ENCODE measurements at regions of chr7 and their contacts with region 1.

Region 1: GRCh38 chr7:79377097-79377496 is 76.4 kb downstream of the MAGI2 start:
- DNase-seq: peak; percentile 50
- ATAC-seq: peak; percentile 49; the same call in 1 of the 2 replicates
- H3K4me3 ChIP-seq: no peak overlapping the region
- H3K27ac ChIP-seq: no peak overlapping the region
- H3K4me1 ChIP-seq: peaks cover 2% of the 10 kb centered on the region; the same call in 1 of the 2 replicates
- H3K27me3 ChIP-seq: no peaks in the 10 kb centered on the region
- CTCF ChIP-seq: no peak
- POLR2A ChIP-seq: no peak
- RAD21 ChIP-seq: no peak

Region 2: DNA sequence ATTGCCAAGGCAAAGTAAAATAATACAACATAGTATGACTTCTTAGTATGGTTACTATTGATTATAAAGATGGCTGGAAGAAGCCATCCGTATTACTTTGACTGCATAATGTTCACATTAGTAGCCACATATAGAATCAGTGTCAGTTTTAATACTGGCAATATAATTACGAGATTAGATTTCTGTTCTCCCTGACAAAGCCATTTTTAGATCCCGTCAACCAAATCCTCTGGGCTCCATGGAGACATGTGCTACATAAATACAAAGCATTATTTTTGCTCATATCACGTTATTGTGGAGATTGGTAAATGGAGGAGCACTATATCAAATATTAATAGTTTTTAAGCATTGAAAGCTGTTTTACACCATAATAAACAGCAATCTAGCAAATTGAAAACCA is 47.6 kb before region 1 on chr7:
- CTCF ChIA-PET with region 1: no interaction called
- POLR2A ChIA-PET with region 1: no interaction called
- dilution Hi-C with region 1: no loop called
- in situ Hi-C with region 1: no loop called
- intact Hi-C with region 1: no loop called
- DNase-seq: no peak
- ATAC-seq: no peak
- H3K4me3 ChIP-seq: no peak overlapping the region
- H3K27ac ChIP-seq: no peak overlapping the region
- H3K4me1 ChIP-seq: no peaks in the 10 kb centered on the region
- H3K27me3 ChIP-seq: no peaks in the 10 kb centered on the region
- CTCF ChIP-seq: no peak
- POLR2A ChIP-seq: no peak
- RAD21 ChIP-seq: no peak

Region 3: DNA sequence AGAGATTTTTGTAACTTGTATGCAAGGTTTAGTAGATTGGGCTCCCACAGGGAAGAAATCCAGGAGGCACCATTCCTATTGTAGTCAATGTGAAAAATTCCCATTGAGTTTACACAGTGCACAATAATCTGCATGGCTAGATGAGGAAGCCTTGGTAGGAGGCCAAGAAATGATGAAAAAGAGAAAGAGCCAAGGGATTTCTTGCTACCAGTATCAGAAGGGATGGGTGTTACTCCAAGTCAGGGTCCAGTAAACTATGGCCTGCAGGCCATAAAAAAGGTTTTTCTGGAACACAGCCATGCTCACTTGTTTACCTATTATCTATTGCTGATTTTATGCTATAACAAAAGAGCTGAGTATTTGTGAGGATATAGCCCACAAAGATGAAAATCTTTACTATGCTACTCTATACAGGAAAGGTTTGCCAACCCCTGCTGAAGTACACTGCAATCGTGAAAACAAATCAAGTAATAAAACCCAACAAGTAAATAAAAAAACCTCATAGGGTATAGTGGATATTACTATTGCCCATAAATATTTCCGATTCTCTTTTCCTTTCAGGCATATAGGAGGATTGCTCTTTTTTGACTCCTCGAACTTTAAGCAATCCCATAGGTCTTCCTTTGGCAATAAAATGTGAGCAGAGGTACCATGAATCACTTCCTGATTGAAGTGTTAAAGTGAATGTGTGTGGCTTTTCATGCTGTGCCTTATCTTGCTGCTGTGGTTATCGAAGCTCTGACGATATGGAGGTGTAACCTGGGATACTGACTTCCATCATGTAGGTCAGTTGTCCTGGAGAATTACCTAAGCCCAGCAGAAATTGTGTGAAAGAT is 332.7 kb after region 1 on chr7:
- CTCF ChIA-PET with region 1: no interaction called
- POLR2A ChIA-PET with region 1: interaction called, 13 read pairs
- dilution Hi-C with region 1: no loop called
- in situ Hi-C with region 1: no loop called
- intact Hi-C with region 1: no loop called
- DNase-seq: peak; percentile 56
- ATAC-seq: no peak; the same call in 1 of the 2 replicates
- H3K4me3 ChIP-seq: no peak overlapping the region
- H3K27ac ChIP-seq: no peak overlapping the region
- H3K4me1 ChIP-seq: no peaks in the 10 kb centered on the region
- H3K27me3 ChIP-seq: no peaks in the 10 kb centered on the region
- CTCF ChIP-seq: no peak
- POLR2A ChIP-seq: no peak
- RAD21 ChIP-seq: no peak